ENCODE measurements at regions of chr14 and their contacts with region 1.

Region 1: DNA sequence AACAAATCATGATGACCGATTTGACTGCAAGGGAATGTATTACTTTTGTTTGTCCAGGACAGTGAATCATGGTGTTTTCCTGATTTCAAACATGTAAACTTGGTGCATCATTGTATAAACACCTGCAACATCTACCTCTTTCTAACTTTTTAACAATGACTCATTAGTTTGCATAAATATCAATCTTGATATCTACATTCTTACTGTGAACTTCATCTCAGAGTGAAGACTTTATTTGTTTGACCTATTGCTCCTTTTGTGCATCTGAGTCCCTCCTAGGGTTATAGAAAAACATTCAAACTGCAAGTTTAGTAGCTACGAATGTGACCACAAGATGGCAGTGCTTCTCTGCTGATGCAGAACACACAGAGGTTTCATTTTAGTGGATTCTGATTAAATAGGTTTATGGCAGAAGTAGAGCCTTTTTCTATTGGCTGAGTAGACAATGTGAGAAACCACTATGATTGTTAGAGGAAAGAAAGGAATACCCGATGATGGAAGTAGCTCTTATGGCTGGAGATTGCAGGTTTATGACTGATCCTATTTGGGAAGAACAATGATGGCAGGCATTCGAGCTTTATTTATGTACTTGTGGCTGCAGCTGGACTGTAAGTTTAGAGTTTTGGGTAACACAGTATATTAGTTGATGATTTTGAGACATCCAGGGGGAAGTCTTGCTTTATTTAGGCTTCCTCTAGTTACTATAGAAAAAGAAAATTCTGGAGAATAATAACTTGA is 244.2 kb upstream of the OR4E1 start:
- DNase-seq: peak; percentile 11
- H3K4me3 ChIP-seq: peak overlapping the region; percentile 28 to 41; a peak in 3 of 4 replicates
- H3K27ac ChIP-seq: no peak overlapping the region
- H3K4me1 ChIP-seq: no peaks in the 10 kb centered on the region
- H3K27me3 ChIP-seq: no peaks in the 10 kb centered on the region
- CTCF ChIP-seq: peak; percentile 89
- EP300 ChIP-seq: no peak
- RAD21 ChIP-seq: peak; percentile 58

Region 2: DNA sequence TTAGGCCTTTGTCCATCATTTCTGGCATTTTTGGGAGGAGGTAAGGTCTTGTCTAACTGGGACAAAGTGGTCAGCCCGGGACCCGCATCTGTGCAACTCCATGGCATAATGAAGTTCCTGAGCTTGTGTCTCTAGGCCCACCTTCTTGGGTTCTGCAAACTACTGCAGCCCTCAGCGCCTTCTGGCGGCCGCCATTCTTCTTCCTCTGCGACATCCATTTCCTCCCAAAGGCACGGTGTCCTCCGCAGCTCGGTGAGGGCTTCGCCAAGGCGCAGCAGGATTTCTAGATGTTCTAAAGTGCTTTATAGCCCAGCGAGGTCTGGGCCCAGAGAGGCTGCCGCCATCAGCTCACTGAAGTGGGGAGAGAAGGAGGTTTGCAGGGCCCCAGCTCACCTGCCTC is 109.9 kb before region 1 on chr14:
- CTCF ChIA-PET with region 1: no interaction called
- POLR2A ChIA-PET with region 1: no interaction called
- DNase-seq: no peak
- H3K4me3 ChIP-seq: no peak overlapping the region
- H3K27ac ChIP-seq: no peak overlapping the region
- H3K4me1 ChIP-seq: no peaks in the 10 kb centered on the region
- H3K27me3 ChIP-seq: peaks cover 14% of the 10 kb centered on the region; the same call in 1 of the 2 replicates
- CTCF ChIP-seq: no peak
- EP300 ChIP-seq: no peak
- RAD21 ChIP-seq: no peak

Region 3: GRCh38 chr14:21902650-21903103 is 15.2 kb before region 1 on chr14:
- CTCF ChIA-PET with region 1: interaction called, 22 read pairs
- POLR2A ChIA-PET with region 1: no interaction called
- DNase-seq: no peak
- H3K4me3 ChIP-seq: no peak overlapping the region
- H3K27ac ChIP-seq: no peak overlapping the region
- H3K4me1 ChIP-seq: no peaks in the 10 kb centered on the region
- H3K27me3 ChIP-seq: no peaks in the 10 kb centered on the region
- CTCF ChIP-seq: peak; percentile 57
- EP300 ChIP-seq: no peak
- RAD21 ChIP-seq: no peak